Esophagus muscularis mucosa (tissue), 4 donors: ENCODE measurements at regions of chr1 and their contacts with region 1.

Region 1: DNA sequence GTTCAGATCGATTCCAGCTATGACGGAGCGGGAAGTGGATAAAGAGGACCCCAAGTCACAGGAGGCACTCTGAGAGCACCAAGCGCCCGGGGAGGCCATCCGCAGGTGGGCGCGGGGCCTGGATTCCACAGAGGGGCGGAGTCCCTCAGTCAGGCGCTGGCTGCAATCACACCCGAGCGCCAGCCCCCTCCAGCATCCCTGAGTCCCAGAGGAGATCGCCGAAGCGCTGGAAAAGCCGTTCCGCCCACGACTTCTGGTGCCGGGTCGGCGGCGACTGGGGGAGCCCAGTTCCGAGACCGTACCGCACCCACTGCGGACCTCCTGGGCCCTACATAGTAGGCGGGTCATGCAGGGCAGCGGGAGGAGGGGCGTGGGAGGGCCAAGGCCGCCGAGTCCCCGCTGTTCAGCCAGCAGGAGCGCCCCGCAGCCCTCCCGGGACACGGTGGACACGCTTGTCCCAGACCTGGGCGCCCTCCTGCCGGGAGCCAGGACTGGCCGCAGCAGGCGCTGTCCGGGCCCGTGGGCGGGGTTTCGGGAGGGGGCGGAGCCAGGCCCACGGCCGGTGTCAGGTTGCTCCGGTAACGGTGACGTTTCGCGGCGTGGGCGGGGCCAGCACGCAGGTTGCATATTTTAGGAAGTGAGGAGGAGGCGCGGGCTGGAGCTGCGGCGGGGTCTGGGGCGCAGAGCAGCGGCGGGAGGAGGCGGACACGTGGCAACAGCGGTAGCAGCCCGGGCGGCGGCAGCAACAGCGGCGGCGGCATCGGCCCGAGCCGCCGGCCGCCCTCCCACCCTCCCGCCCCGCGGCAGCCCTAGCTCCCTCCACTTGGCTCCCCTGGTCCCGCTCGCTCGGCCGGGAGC is at the start of gene ATP1A1:
- DNase-seq: peak; percentile 99
- H3K4me3 ChIP-seq: peak within 1 kb of the TSS; percentile 74 to 93 (median 83)
- H3K27ac ChIP-seq: peak within 1 kb of the TSS; percentile 93 to 97 (median 94)
- H3K4me1 ChIP-seq: peaks cover 31 to 49% (median 46%) of the 10 kb centered on the region in 4 donors
- H3K27me3 ChIP-seq: no peaks in the 10 kb centered on the region
- CTCF ChIP-seq: peak in 1 of 3 experiments; percentile 6
- EP300 ChIP-seq: no peak
- POLR2A ChIP-seq: peak; percentile 86
- total RNA-seq, gene ATP1A1: 90.1 to 196 (median 157) TPM

Region 2: GRCh38 chr1:115069573-115070308 is 1303.1 kb before region 1 on chr1:
- intact Hi-C with region 1: loop called (anchors 10 kb)
- DNase-seq: no peak
- H3K4me3 ChIP-seq: no peak overlapping the region
- H3K27ac ChIP-seq: peak overlapping the region; percentile 80 to 87 (median 83)
- H3K4me1 ChIP-seq: peaks cover 35 to 87% (median 83%) of the 10 kb centered on the region in 4 donors
- H3K27me3 ChIP-seq: no peaks in the 10 kb centered on the region
- CTCF ChIP-seq: no peak
- EP300 ChIP-seq: no peak
- POLR2A ChIP-seq: no peak

Region 3: GRCh38 chr1:116020668-116021275 is 352.0 kb before region 1 on chr1:
- intact Hi-C with region 1: no loop called
- DNase-seq: no peak
- H3K4me3 ChIP-seq: no peak overlapping the region
- H3K27ac ChIP-seq: no peak overlapping the region
- H3K4me1 ChIP-seq: no peaks in the 10 kb centered on the region
- H3K27me3 ChIP-seq: no peaks in the 10 kb centered on the region
- CTCF ChIP-seq: peak; percentile 19 to 39 (median 24)
- EP300 ChIP-seq: no peak
- POLR2A ChIP-seq: no peak

Region 4: GRCh38 chr1:116168277-116169097 is 204.3 kb before region 1 on chr1:
- intact Hi-C with region 1: loop called (anchors 10 kb)
- DNase-seq: peak; percentile 94
- H3K4me3 ChIP-seq: peak overlapping the region; percentile 62 to 79 (median 68)
- H3K27ac ChIP-seq: peak overlapping the region; percentile 68 to 73 (median 72)
- H3K4me1 ChIP-seq: peaks cover 34 to 47% (median 44%) of the 10 kb centered on the region in 4 donors
- H3K27me3 ChIP-seq: no peaks in the 10 kb centered on the region
- CTCF ChIP-seq: peak; percentile 88 to 97 (median 93)
- EP300 ChIP-seq: no peak
- POLR2A ChIP-seq: no peak